Activated CD4-positive, alpha-beta T cell treated with anti-CD3 and anti-CD28 coated beads, Interleukin-2, amount 10 ng/mL, durations not matched to agents 24 days and 14 days (primary cell): ENCODE measurements at regions of chr11 and their contacts with region 1.

Region 1: DNA sequence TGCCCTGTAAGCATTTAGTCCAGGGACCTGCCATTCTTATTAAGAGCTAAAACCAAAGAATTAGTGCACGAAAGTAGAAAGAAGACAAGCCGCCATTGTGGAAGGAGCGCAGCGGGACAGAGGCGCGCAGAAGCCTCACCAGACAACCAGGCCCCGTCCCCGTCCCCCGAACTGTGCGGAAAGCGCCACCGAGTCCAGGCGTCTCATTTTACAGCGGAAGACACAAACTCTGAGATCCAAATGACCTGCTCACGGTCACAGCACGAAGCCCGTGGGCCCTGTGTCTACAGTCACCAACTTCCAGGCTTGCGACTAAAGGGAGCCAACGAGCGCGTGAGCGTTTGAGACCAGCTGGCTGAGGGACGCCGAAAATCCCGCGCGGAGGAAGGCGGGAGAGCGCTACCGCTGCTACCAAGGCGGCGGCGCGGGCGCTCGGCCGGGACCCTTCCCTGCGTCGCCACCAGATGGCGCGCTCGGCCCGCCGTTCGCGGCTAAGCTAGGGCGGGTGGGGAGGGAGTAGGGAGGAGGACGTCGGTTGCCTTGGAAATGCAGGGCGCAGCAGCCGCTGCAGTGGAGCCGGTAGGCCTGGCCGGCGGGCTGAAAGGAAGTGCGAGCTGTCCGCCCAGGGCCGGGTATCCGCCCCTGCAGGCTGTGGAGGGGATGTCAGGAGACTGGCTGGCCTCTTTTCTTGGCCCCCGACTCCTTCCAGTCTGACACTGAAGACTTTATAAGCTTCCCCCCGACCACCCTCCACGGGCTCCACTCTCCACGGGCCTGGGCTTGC is 434 bp upstream of the CCDC83 start:
- DNase-seq: peak; percentile 98
- H3K4me3 Mint-ChIP-seq: peak overlapping the region; percentile 94
- H3K27ac Mint-ChIP-seq: peak overlapping the region; percentile 96
- H3K4me1 Mint-ChIP-seq: peaks cover 11% of the 10 kb centered on the region
- H3K27me3 Mint-ChIP-seq: no peaks in the 10 kb centered on the region

Region 2: GRCh38 chr11:85826116-85826855 is 28.5 kb before region 1 on chr11:
- intact Hi-C with region 1: loop called (anchors 2 kb)
- DNase-seq: peak; percentile 79
- H3K4me3 Mint-ChIP-seq: peak overlapping the region; percentile 66
- H3K27ac Mint-ChIP-seq: peak overlapping the region; percentile 67
- H3K4me1 Mint-ChIP-seq: peaks cover 66% of the 10 kb centered on the region
- H3K27me3 Mint-ChIP-seq: no peaks in the 10 kb centered on the region

Region 3: GRCh38 chr11:86041975-86042378 is 187.2 kb after region 1 on chr11:
- intact Hi-C with region 1: loop called (anchors 10 kb)
- DNase-seq: peak; percentile 88
- H3K4me3 Mint-ChIP-seq: peak overlapping the region; percentile 45
- H3K27ac Mint-ChIP-seq: peak overlapping the region; percentile 73
- H3K4me1 Mint-ChIP-seq: peaks cover 57% of the 10 kb centered on the region
- H3K27me3 Mint-ChIP-seq: no peaks in the 10 kb centered on the region

Region 4: DNA sequence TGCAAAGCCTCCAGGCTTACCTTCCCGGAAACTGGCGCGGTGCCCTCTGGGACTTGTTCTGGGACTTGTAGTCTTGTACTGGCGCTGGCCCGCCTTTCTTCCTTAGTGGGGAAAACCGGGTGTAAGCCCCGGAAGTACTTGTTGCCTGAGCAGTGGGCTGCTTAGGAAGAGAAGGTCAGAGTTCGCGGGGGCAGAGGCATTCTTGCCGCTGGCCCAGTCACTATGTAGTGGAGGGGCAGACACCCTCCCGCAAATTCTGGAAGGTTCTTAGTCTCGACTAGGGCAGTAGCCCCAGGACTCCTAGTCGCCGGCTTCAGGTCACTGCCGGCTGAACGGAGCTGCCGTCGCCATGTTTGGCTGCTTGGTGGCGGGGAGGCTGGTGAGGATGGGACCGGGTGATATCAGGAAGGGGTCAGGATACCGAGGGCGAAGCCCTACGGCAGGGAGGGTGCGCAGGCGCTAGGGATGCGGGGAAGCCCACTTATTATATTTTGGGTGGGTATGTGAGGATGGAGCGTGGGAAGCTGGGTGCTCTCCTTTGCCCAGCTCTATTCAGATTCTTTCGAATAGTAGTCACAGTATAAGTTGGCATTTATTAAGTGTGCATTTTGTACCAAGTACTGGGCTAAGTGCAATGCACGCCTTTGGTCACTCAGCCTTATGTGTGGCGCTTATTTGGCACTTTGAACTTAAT is 447.5 kb after region 1 on chr11 and contains the start of gene HIKESHI:
- intact Hi-C with region 1: loop called (anchors 2 kb)
- DNase-seq: peak; percentile 96
- H3K4me3 Mint-ChIP-seq: peak within 1 kb of the TSS; percentile 99
- H3K27ac Mint-ChIP-seq: peak within 1 kb of the TSS; percentile 98
- H3K4me1 Mint-ChIP-seq: peaks cover 19% of the 10 kb centered on the region
- H3K27me3 Mint-ChIP-seq: peaks cover 2% of the 10 kb centered on the region
- total RNA-seq, gene HIKESHI: 54.0 and 62.4 TPM in 2 replicates

Region 5: DNA sequence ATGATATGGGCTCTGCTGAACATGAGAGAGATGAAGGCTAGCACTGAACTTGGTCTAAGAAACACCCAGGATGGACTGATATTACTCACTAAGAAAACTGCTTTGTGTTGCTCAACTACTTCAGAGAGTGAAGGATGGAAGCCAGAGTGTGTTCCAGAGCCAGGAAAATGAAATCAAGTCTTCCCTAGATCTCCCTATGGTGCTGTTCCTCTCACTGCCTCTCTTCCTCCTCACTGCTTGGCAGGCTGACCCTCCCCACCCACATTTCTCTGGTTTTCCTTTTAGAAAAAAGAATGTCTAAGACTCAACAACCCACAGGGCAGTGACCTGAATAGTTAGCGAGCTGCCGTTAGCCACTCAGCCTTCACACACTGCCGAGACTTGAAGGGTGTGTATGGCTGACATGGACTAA is 585.6 kb after region 1 on chr11:
- intact Hi-C with region 1: loop called (anchors 10 kb)
- DNase-seq: no peak
- H3K4me3 Mint-ChIP-seq: no peak overlapping the region
- H3K27ac Mint-ChIP-seq: peak overlapping the region; percentile 74
- H3K4me1 Mint-ChIP-seq: peaks cover 47% of the 10 kb centered on the region
- H3K27me3 Mint-ChIP-seq: no peaks in the 10 kb centered on the region

Region 6: DNA sequence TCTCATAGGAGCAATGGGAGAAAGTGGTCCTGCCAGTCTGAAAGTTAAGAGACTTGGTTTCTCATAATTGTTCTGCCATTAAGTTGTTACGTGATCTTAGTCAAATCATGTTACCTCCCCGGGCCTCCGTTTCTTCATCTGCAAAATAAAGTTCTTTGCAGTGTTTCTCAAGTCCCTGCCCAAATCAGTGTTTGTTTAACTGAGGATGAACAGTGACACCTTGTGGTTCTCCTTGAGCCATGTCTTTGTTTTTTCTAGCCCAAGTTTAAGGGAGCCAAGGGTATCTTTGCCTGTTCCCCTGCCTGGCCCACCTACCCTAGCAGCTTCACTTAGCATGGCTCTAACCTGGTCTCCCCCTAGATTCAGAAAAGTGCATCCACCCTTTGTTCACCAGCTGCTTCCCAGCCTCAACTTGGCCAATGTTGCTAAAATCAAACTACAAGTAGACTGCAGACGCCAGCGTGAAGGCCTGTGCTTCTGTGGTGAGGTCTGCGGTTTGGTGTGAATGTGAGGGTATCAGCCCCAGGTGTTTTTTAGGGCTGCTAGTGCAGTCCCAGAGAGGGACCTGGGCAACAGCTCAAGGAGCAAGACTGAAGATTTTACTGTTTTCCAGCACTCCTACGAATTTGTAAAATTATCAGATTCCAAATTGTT is 1064.9 kb after region 1 on chr11:
- intact Hi-C with region 1: loop called (anchors 5 kb)
- DNase-seq: peak; percentile 72
- H3K4me3 Mint-ChIP-seq: no peak overlapping the region
- H3K27ac Mint-ChIP-seq: no peak overlapping the region
- H3K4me1 Mint-ChIP-seq: peaks cover 2% of the 10 kb centered on the region
- H3K27me3 Mint-ChIP-seq: peaks cover 9% of the 10 kb centered on the region